Left lung (tissue), 14 donors: ENCODE measurements at regions of chr5 and their contacts with region 1.

Region 1: GRCh38 chr5:135829681-135830383 is 4.6 kb upstream of the SLC25A48 start:
- DNase-seq: peak in 3 of 4 donors; percentile 65 to 85 (median 82)
- ATAC-seq: peak; percentile 74
- H3K4me3 ChIP-seq: no peak overlapping the region
- H3K27ac ChIP-seq: no peak overlapping the region
- H3K4me1 ChIP-seq: peaks cover under 1 to 5% of the 10 kb centered on the region in 2 donors
- H3K27me3 ChIP-seq: peaks cover 7 to 51% of the 10 kb centered on the region in 2 donors
- CTCF ChIP-seq: peak; percentile 60 to 77

Region 2: DNA sequence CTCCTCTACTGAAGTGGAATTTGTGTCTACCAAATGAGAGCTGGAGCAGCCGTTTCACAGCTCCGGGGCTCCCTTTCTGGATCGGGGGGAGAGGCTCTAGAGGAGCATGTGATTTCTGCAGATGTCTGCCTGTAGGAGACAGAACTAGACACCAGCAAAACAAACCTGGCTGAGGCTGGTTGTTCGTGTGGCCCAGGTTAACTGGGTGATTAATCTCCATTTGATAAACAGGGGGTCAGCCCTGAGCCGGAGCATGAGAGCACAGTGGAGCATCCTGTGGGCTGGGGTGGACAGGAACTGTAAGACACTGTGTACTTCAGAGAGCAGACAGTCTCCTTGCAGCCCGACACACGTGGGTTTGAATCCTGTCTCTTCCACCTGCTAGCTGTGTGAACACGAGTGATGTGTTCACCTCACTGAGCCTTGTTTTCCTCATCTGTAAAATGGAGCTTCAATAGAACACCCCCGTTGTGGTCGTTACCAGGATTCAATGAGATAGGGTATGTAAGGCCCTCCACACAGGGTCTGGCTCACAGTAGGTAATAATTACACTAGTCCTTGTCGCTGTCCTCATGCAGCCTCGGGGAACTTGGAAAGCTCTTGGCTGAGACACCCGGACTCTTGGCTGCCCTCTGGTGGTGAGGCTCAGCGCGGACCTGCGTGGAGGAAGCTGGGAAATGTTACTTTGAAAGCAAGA is 264.0 kb before region 1 on chr5:
- intact Hi-C with region 1: loop called in 1 of 2 experiments (anchors 5 kb)
- DNase-seq: peak in 3 of 4 donors; percentile 54 to 89 (median 64)
- ATAC-seq: peak; percentile 90
- H3K4me3 ChIP-seq: no peak overlapping the region
- H3K27ac ChIP-seq: no peak overlapping the region
- H3K4me1 ChIP-seq: peaks cover 0 to 3% of the 10 kb centered on the region in 2 donors
- H3K27me3 ChIP-seq: peaks cover 0 to 28% of the 10 kb centered on the region in 2 donors
- CTCF ChIP-seq: peak; percentile 83 to 84